Panc1 (cell line): ENCODE measurements at regions of chr12 and their contacts with region 1.

Region 1: GRCh38 chr12:109518820-109519665 is 41.6 kb downstream of the UBE3B start:
- DNase-seq: peak; percentile 33
- ATAC-seq: peak; percentile 79; the same call in 1 of the 2 replicates
- H3K4me3 ChIP-seq: no peak overlapping the region
- H3K27ac ChIP-seq: no peak overlapping the region
- H3K4me1 ChIP-seq: no peaks in the 10 kb centered on the region
- H3K27me3 ChIP-seq: no peaks in the 10 kb centered on the region
- CTCF ChIP-seq: peak; percentile 92

Region 2: DNA sequence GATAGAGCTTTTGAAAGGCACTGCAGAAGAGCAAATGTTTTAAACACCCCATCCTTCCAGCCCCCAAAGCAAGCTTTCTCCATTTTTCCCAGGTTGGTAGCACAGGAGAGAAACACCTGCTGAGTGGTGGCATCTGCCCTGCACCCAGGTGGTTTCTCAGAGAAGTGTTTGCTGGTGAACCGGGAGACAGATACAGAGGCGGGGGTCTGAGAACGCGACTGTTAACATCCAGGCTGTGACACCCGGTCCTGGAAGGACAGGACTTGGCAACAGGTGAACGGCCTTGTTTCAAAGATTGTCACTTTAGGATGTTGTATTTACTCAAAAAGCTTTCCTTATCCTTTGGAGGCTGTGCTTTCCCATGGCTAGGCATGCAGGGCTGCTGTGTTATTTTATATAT is 35.7 kb after region 1 on chr12:
- CTCF ChIA-PET with region 1: no interaction called
- POLR2A ChIA-PET with region 1: interaction called, 15 read pairs
- in situ Hi-C with region 1: no loop called
- intact Hi-C with region 1: no loop called
- DNase-seq: no peak
- ATAC-seq: no peak
- H3K4me3 ChIP-seq: no peak overlapping the region
- H3K27ac ChIP-seq: no peak overlapping the region
- H3K4me1 ChIP-seq: no peaks in the 10 kb centered on the region
- H3K27me3 ChIP-seq: peaks cover 4% of the 10 kb centered on the region; the same call in 1 of the 2 replicates
- CTCF ChIP-seq: no peak

Region 3: GRCh38 chr12:109612975-109613502 is 94.0 kb after region 1 on chr12:
- CTCF ChIA-PET with region 1: interaction called, 10 read pairs
- POLR2A ChIA-PET with region 1: no interaction called
- in situ Hi-C with region 1: no loop called
- intact Hi-C with region 1: no loop called
- DNase-seq: no peak
- ATAC-seq: peak; percentile 83
- H3K4me3 ChIP-seq: no peak overlapping the region
- H3K27ac ChIP-seq: no peak overlapping the region
- H3K4me1 ChIP-seq: no peaks in the 10 kb centered on the region
- H3K27me3 ChIP-seq: peaks cover 6% of the 10 kb centered on the region
- CTCF ChIP-seq: no peak; the same call in 1 of the 2 replicates

Region 4: DNA sequence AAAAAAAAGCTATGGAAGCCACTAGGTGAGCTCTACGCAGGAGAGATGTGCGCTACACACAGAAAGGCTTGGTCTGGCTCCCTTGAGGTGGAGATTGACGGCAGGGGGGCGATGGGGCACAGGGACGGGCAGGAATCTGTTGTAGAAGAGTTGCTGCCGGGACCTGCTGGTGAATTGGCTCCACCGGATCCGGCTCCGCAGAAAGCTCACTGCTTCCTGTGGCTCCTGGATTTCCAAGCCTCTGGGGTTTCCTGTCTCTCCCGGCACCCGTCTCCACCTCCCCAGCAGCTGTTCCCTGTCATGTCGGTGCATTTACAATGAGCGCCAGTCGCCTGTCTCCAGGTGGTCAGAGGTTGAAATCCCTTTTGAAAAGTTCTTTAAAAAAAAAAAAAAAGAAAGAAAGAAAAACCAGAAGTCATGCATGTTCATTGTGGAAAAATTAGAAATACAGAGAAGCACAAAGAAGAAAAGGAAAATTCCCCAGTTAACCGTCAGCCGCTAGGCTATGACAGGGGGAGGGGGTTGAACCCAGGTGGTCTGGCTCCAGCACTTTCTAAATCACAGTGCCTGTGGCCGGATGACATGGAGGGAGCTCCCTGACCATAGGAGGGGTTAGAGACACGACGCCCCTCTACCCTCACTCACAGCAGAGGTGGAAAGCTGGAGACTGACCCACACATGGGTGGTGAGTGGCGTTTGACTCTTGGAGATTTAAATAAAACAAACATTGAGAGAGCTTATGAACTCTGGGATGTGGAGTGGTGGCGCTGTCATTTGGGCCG is 215.4 kb after region 1 on chr12:
- CTCF ChIA-PET with region 1: no interaction called
- POLR2A ChIA-PET with region 1: no interaction called
- in situ Hi-C with region 1: no loop called
- intact Hi-C with region 1: no loop called
- DNase-seq: no peak
- ATAC-seq: no peak
- H3K4me3 ChIP-seq: no peak overlapping the region
- H3K27ac ChIP-seq: no peak overlapping the region
- H3K4me1 ChIP-seq: no peaks in the 10 kb centered on the region
- H3K27me3 ChIP-seq: no peaks in the 10 kb centered on the region
- CTCF ChIP-seq: no peak

Region 5: DNA sequence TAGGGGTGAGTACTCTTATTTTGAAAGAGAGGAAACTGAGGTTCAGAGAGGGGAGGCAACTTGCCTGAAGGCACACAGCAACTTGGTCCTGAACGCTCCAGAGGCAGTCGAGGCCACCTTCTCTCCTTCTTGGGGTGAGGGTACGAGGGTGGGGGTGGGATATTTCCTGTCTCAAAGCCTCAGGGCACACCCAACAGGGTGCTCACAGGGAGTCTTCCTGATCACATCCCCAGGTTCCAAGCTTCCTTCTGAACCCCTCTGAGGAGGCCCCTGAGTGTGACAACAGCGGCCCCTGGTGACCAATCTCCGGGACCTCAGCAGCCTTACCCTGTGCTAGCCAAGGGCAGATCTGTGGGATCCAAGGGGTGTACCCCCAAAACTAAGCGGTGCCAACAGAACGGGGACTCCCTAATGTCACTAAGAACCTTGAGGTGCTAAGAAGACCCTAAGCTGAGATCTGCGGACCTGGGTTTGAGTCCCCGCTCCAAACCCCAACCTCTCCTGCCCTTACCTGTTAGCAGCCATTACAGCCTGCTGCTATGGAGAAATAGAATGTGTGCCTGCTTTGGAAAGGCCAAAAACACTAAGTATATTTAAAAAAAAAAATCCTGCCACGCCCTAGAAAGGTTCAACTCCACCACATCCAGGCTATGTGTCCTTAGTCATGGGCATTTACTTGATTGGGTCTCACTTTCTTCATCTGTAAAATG is 256.3 kb after region 1 on chr12:
- CTCF ChIA-PET with region 1: interaction called, 4 read pairs
- POLR2A ChIA-PET with region 1: no interaction called
- in situ Hi-C with region 1: no loop called
- intact Hi-C with region 1: loop called (anchors 1 kb)
- DNase-seq: peak; percentile 30
- ATAC-seq: peak; percentile 88
- H3K4me3 ChIP-seq: no peak overlapping the region
- H3K27ac ChIP-seq: no peak overlapping the region
- H3K4me1 ChIP-seq: peaks cover 8% of the 10 kb centered on the region
- H3K27me3 ChIP-seq: no peaks in the 10 kb centered on the region
- CTCF ChIP-seq: peak; percentile 97

Region 6: GRCh38 chr12:109795023-109795422 is 276.0 kb after region 1 on chr12:
- CTCF ChIA-PET with region 1: no interaction called
- POLR2A ChIA-PET with region 1: interaction called, 10 read pairs
- in situ Hi-C with region 1: no loop called
- intact Hi-C with region 1: no loop called
- DNase-seq: no peak
- ATAC-seq: no peak
- H3K4me3 ChIP-seq: no peak overlapping the region
- H3K27ac ChIP-seq: no peak overlapping the region
- H3K4me1 ChIP-seq: no peaks in the 10 kb centered on the region
- H3K27me3 ChIP-seq: no peaks in the 10 kb centered on the region; the same call in none of the 2 replicates
- CTCF ChIP-seq: no peak